ENCODE measurements at regions of chr2 and their contacts with region 1.

Region 1: DNA sequence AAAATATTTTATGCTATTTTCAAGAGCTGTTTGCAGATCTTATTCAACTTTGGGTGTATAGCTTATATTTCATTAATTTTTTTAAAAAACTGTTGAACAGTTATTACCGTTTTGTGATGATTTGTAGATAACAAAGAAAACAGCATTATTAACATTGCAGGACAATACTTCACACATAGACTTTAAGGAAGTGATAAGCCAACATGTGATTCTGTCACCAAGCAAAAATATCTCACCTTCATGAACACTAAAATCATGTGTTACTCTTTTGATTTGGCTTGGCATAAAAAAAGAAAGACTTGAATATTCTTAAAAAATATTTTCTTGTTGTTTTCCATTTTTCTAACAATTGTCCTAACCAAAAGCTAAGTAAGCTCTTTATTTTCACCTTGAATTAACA is 33.0 kb downstream of the SLC35F5 start:
- DNase-seq: no peak
- ATAC-seq: no peak
- H3K4me3 ChIP-seq: no peak overlapping the region
- H3K4me1 ChIP-seq: no peaks in the 10 kb centered on the region
- CTCF ChIP-seq: no peak

Region 2: GRCh38 chr2:113309655-113310387 is 413.6 kb before region 1 on chr2:
- intact Hi-C with region 1: no loop called
- DNase-seq: no peak
- ATAC-seq: peak; percentile 29
- H3K4me3 ChIP-seq: no peak overlapping the region
- H3K4me1 ChIP-seq: peaks cover 2% of the 10 kb centered on the region
- CTCF ChIP-seq: no peak

Region 3: DNA sequence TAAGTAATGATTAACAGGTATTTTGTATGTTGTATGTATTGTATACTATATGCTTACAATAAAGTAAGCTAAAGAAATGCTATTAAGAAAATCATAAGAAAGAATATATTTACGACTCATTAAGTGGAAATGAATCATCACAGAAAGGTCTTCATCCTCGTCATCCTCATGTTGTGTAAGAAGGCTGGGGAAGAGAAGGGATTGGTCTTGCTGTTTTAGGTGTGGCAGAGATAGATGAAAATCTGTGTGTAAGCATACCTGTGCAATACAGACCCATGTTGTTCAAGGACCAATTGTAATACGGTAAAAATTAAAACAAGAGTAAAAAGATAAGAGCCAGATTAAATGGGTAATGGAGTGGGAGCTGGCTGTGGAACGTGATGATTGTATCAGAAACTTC is 16.4 kb after region 1 on chr2:
- intact Hi-C with region 1: loop called in 1 of 2 experiments (anchors 2 kb)
- DNase-seq: no peak
- ATAC-seq: no peak
- H3K4me3 ChIP-seq: no peak overlapping the region
- H3K4me1 ChIP-seq: no peaks in the 10 kb centered on the region
- CTCF ChIP-seq: no peak

Measured in mucosa of descending colon (tissue), 3 donors.